H1 (cell line): ENCODE measurements at regions of chr6 and their contacts with region 1.

Region 1: GRCh38 chr6:63635588-63636517 is at the start of gene PHF3:
- DNase-seq: peak; percentile 60 to 87
- H3K4me3 ChIP-seq: peak within 1 kb of the TSS; percentile 85 to 95 (median 92)
- H3K27ac ChIP-seq: peak within 1 kb of the TSS; percentile 96
- H3K4me1 ChIP-seq: peaks cover 2 to 5% (median 4%) of the 10 kb centered on the region in 4 experiments; a peak in 4 of 7 replicates
- H3K27me3 ChIP-seq: peaks cover 0 to 12% (median 4%) of the 10 kb centered on the region in 4 experiments; a peak in 4 of 7 replicates
- CTCF ChIP-seq: no peak
- EP300 ChIP-seq: 0 out of 3 replicates have a peak, but pooled peaks of 1 of the 2 experiments have one; percentile 20
- POLR2A ChIP-seq: peak; percentile 69 to 95
- RAD21 ChIP-seq: no peak
- total RNA-seq, gene PHF3: 69.3 and 70.9 TPM in 2 replicates

Region 2: DNA sequence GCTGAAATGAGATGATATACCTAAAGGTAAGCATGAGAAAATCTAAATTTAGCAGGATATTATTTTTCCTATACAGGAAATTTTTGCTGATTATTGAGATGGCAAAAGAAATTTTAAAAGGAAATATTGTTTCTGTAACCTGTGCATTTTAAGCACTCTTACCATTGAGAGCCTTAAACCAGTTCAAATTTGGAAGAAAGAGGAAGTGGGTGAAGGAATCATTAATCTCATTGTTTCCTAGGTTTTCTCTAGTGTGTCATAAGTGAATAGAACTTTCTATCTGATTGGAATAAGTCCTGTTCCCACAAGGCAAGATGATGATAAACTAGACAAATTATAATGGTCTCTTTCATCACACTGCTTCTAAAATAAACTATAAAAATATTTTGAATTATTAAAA is 447.0 kb before region 1 on chr6:
- CTCF ChIA-PET with region 1: no interaction called
- POLR2A ChIA-PET with region 1: no interaction called
- DNase-seq: no peak
- H3K4me3 ChIP-seq: no peak overlapping the region
- H3K27ac ChIP-seq: no peak overlapping the region
- H3K4me1 ChIP-seq: no peaks in the 10 kb centered on the region
- H3K27me3 ChIP-seq: no peaks in the 10 kb centered on the region
- CTCF ChIP-seq: no peak
- EP300 ChIP-seq: no peak
- POLR2A ChIP-seq: no peak
- RAD21 ChIP-seq: no peak

Region 3: GRCh38 chr6:63573140-63573898 is 62.5 kb before region 1 on chr6:
- CTCF ChIA-PET with region 1: interaction called, 3 read pairs
- POLR2A ChIA-PET with region 1: interaction called, 23 read pairs
- DNase-seq: peak; percentile 76 to 86
- H3K4me3 ChIP-seq: peak overlapping the region; percentile 81 to 85 (median 82)
- H3K27ac ChIP-seq: peak overlapping the region; percentile 98
- H3K4me1 ChIP-seq: peaks cover 0 to 3% (median 0%) of the 10 kb centered on the region in 4 experiments; a peak in 1 of 7 replicates
- H3K27me3 ChIP-seq: 0 out of 7 replicates have a peak, but pooled peaks cover 0 to 2% (median under 1%) of the 10 kb centered on the region in 4 experiments
- CTCF ChIP-seq: no peak
- EP300 ChIP-seq: no peak
- POLR2A ChIP-seq: peak; percentile 93 to 98
- RAD21 ChIP-seq: no peak

Region 4: GRCh38 chr6:63624091-63624490 is 11.8 kb before region 1 on chr6:
- CTCF ChIA-PET with region 1: no interaction called
- POLR2A ChIA-PET with region 1: interaction called, 15 read pairs
- DNase-seq: no peak
- H3K4me3 ChIP-seq: no peak overlapping the region
- H3K27ac ChIP-seq: no peak overlapping the region
- H3K4me1 ChIP-seq: no peaks in the 10 kb centered on the region
- H3K27me3 ChIP-seq: no peaks in the 10 kb centered on the region
- CTCF ChIP-seq: no peak
- EP300 ChIP-seq: no peak
- POLR2A ChIP-seq: no peak
- RAD21 ChIP-seq: no peak

Region 5: GRCh38 chr6:63652980-63653379 is 17.1 kb after region 1 on chr6:
- CTCF ChIA-PET with region 1: no interaction called
- POLR2A ChIA-PET with region 1: interaction called, 27 read pairs
- DNase-seq: no peak
- H3K4me3 ChIP-seq: no peak overlapping the region
- H3K27ac ChIP-seq: no peak overlapping the region
- H3K4me1 ChIP-seq: peaks cover 0 to 2% (median 0%) of the 10 kb centered on the region in 4 experiments; a peak in 1 of 7 replicates
- H3K27me3 ChIP-seq: no peaks in the 10 kb centered on the region
- CTCF ChIP-seq: no peak
- EP300 ChIP-seq: no peak
- POLR2A ChIP-seq: no peak
- RAD21 ChIP-seq: no peak

Region 6: GRCh38 chr6:63705707-63706106 is 69.9 kb after region 1 on chr6:
- CTCF ChIA-PET with region 1: no interaction called
- POLR2A ChIA-PET with region 1: no interaction called
- DNase-seq: no peak
- H3K4me3 ChIP-seq: no peak overlapping the region
- H3K27ac ChIP-seq: no peak overlapping the region
- H3K4me1 ChIP-seq: no peaks in the 10 kb centered on the region
- H3K27me3 ChIP-seq: no peaks in the 10 kb centered on the region
- CTCF ChIP-seq: no peak
- EP300 ChIP-seq: no peak
- POLR2A ChIP-seq: no peak
- RAD21 ChIP-seq: no peak